ENCODE measurements at regions of chr2 and their contacts with region 1.

Region 1: DNA sequence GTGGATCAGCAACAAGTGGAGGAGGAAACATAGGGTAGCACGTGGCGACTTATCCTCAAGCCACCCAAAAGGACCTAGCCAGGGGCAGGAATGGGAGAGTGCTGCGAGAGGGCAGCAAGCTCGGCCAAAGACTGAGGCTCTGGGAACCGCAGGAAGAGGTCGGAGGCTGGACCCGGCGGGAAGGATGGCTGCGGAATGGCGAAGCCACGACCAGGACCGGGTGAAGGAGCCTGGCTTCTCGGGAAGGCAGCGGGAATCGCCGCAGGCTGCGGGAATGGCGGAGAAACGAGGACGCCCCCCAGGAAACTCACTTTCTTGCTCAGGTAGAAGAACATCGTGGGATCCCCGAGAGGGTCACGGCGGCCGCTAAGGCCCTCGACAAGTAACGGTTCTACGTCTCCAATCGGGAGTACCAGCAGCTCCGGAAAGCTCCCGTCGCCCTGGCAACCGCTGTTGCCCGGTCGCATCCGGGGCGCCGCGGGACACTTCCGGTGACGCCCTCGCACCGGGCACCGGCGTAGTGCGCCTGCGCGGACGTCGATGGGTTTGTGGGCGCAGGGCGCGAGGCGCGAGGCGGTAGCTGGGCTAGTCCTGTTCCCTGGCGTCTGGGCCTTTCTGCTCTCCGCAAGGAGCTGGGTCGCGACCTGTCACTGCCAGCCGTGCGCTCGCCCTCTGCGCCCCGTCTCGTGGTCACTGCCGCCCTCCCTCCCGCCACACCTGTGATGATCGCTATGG is at the start of gene WDR35:
- DNase-seq: peak; percentile 76 to 96 (median 91)

Region 2: GRCh38 chr2:19901442-19902215 is 88.2 kb before region 1 on chr2 and contains the start of gene TTC32:
- intact Hi-C with region 1: loop called (anchors 5 kb)
- DNase-seq: peak; percentile 88 to 97 (median 94)